Common myeloid progenitor, CD34-positive (primary cell): ENCODE measurements at regions of chr2 and their contacts with region 1.

Region 1: GRCh38 chr2:26173776-26174482 is 1.0 kb downstream of the GAREM2 start:
- DNase-seq: no peak
- H3K4me3 ChIP-seq: peak overlapping the region in 3 of 7 experiments; percentile 5 to 58 (median 16)
- H3K27ac ChIP-seq: no peak overlapping the region
- H3K4me1 ChIP-seq: peaks cover 0 to 22% (median 12%) of the 10 kb centered on the region in 4 experiments
- H3K27me3 ChIP-seq: peaks cover 0 to 60% (median 20%) of the 10 kb centered on the region in 5 experiments

Region 2: DNA sequence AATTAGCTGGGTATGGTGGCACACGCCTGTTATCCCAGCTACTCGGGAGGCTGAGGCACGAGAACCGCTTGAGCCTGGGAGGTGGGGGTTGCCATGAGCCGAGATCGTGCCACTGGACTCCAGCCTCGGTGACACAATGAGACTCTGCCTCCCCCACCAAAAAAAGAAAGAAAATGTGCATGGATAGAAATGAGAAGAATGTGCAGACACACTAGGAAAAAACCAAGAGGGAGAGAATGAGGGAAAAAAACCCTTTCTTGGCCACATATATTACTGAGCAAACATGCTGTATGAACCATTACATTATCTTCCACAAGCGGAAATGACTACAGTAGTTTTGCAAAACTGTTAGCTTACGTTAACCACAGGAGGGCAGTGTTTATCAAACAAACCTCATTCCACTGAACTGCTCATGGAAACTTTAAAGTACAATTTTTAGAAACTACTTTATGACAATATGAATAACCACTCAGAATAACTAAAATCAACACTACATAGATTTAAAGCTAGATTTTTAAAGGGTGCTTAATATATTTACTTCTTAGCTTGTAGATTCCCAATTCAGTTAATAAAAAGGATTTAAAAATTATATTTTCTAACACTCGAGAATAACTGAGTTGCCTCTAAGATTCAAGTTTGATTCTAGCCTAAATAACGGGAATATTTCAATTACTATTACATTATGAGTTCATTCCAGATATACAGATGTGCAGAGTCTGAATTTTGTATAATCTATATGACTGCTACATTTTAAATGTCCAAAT is 322.0 kb before region 1 on chr2:
- CTCF ChIA-PET with region 1: no interaction called
- POLR2A ChIA-PET with region 1: no interaction called
- DNase-seq: peak; percentile 87 to 93 (median 90)
- H3K4me3 ChIP-seq: peak overlapping the region in 4 of 7 experiments; percentile 22 to 72 (median 46)
- H3K27ac ChIP-seq: peak overlapping the region in 1 of 2 experiments; percentile 76
- H3K4me1 ChIP-seq: peaks cover 14 to 33% (median 24%) of the 10 kb centered on the region in 4 experiments
- H3K27me3 ChIP-seq: no peaks in the 10 kb centered on the region

Region 3: DNA sequence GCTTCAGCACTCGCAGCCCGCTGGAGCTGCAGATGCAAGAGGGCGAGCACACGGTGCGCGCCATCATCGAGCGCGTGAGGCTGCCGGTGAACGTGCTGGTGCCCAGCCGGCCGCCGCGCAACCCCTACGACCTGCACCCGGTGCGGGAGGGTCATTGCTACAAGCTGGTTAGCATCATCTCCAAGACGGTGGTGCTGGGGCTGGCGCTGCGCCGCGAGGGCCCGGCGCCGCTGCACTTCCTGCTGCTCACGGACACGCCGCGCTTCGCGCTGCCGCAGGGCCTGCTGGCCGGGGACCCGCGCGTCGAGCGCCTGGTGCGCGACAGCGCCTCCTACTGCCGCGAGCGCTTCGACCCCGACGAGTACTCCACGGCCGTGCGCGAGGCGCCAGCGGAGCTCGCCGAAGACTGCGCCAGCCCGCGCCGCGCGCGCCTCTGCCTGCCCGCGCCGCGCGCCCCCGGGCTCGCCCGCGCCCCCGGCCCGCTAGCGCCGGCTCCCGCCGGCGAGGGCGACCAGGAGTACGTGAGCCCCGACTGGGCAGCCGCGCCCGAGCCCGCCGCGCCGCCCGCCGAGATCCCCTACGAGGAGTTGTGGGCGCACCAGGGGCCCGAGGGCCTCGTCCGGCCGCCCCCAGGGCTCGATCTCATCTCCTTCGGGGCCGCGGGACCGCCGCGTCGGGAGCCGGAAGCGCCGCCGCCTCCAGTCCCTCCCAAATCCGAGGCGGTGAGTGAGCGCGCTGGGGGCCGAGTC is 10.8 kb after region 1 on chr2:
- CTCF ChIA-PET with region 1: interaction called, 23 read pairs
- POLR2A ChIA-PET with region 1: no interaction called
- DNase-seq: peak; percentile 86 to 94 (median 93)
- H3K4me3 ChIP-seq: peak overlapping the region in 6 of 7 experiments; percentile 36 to 72 (median 55)
- H3K27ac ChIP-seq: no peak overlapping the region
- H3K4me1 ChIP-seq: peaks cover 0 to 14% (median 11%) of the 10 kb centered on the region in 4 experiments
- H3K27me3 ChIP-seq: peaks cover 0 to 23% (median 9%) of the 10 kb centered on the region in 5 experiments

Region 4: GRCh38 chr2:26214759-26215158 is 40.8 kb after region 1 on chr2:
- CTCF ChIA-PET with region 1: no interaction called
- POLR2A ChIA-PET with region 1: no interaction called
- DNase-seq: no peak
- H3K4me3 ChIP-seq: no peak overlapping the region
- H3K27ac ChIP-seq: no peak overlapping the region
- H3K4me1 ChIP-seq: no peaks in the 10 kb centered on the region
- H3K27me3 ChIP-seq: no peaks in the 10 kb centered on the region